ENCODE measurements at regions of chr6 and their contacts with region 1.

Region 1: GRCh38 chr6:33585403-33586107 is 5.5 kb upstream of the BAK1 start:
- DNase-seq: peak; percentile 57 to 96 (median 83)

Region 2: GRCh38 chr6:33633462-33634158 is 48.1 kb after region 1 on chr6:
- intact Hi-C with region 1: loop called (anchors 2 kb)
- DNase-seq: peak in 6 of 10 donors; percentile 9 to 91 (median 51)

Region 3: DNA sequence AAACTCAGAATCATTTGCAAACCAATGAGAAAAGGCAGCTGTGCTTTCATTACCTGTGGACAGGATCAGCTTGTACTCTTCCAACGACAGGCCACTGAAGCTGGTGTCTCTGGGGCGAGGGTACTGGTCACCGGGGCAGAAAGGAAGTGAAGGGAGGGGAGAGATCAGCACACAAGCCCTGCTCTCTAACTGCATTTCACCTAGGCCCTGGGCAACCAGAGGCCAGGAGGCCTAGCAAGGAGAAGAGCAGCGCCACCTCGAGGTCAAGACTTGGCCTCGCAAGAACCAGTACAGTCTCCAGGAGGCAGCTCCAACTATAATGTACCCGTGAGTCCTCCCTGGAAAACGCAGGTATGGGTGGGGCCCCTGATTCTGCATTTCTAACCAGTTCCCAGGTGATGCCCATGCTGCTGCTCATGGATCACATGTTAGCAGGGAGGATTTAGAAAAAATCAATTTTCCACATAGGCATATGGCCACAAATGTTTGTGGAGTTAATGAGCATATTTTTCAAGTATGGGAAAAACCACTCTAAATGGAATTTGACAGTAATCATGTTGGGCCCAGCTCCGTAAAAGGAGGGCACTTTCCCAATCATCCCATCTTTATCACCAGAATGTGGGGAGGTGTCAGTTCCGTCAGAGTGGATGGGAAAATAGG is 115.0 kb after region 1 on chr6:
- intact Hi-C with region 1: loop called (anchors 2 kb)
- DNase-seq: peak in 9 of 10 donors; percentile 47 to 93 (median 64)